Activated naive CD4-positive, alpha-beta T cell treated with anti-CD3 and anti-CD28 coated beads for 36 hours (primary cell): ENCODE measurements at regions of chr6 and their contacts with region 1.

Region 1: DNA sequence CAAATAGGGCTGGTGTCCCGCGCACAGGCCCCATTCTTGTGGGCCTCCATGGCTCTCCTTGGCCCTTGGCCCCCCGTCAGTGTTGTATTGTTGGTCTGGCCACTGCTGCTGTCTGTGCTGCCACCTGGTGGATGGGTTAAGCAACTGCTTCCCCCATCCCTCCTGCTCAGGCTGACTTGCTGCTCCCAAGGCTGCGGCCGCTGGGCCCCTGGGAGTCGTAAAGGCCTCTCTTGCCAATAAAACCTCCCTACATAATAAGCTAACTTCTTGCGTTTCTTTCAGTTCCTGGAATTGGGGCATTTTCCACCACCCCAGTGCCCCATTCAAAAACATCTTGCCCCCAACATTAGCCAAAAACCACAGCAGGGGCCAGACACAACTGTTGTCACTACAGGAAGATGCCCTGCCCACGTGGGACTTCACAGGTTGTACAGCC is 27.1 kb downstream of the CD83 start:
- DNase-seq: peak; percentile 82
- H3K4me3 Mint-ChIP-seq: no peak overlapping the region
- H3K27ac Mint-ChIP-seq: no peak overlapping the region
- H3K4me1 Mint-ChIP-seq: peaks cover 2% of the 10 kb centered on the region
- H3K27me3 Mint-ChIP-seq: no peaks in the 10 kb centered on the region

Region 2: DNA sequence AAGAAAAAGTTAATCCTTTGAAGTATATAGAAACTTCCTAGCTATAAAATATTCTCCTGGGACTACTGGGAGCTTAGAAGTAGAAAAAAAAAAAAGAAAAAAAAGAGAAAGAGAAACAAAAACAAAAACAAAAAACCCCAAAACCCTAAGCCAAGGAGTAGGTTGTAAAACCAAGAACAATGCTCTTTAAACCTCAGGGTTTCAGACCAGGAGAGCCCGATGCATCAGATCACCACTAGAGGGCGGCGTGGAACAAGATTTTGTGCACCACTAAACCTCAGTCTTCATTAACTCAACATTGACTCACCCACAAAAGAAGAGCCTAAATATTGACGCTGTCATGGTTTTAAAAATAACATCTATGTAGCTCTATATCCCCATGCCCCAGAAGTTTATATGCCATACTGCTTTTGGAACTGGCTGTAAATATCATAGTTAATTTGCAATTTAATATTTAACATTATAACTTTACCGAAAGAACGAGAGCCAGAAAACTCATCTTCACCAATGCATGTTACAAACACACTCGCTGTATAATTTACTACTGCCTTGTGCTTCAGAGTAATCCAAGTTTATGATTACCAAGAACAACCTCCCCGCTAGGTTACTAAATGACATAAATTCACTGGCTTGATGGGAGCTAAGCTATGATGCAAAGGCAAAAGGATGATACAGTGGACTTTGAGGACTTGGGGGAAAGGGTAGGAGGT is 349.5 kb before region 1 on chr6:
- CTCF ChIA-PET with region 1: no interaction called
- intact Hi-C with region 1: loop called (anchors 1 kb)
- DNase-seq: peak; percentile 97
- H3K4me3 Mint-ChIP-seq: no peak overlapping the region
- H3K27ac Mint-ChIP-seq: no peak overlapping the region
- H3K4me1 Mint-ChIP-seq: peaks cover 14% of the 10 kb centered on the region
- H3K27me3 Mint-ChIP-seq: no peaks in the 10 kb centered on the region

Region 3: GRCh38 chr6:13908955-13909381 is 235.7 kb before region 1 on chr6:
- CTCF ChIA-PET with region 1: interaction called, 30 read pairs
- intact Hi-C with region 1: loop called (anchors 1 kb)
- DNase-seq: peak; percentile 62
- H3K4me3 Mint-ChIP-seq: no peak overlapping the region
- H3K27ac Mint-ChIP-seq: no peak overlapping the region
- H3K4me1 Mint-ChIP-seq: peaks cover 2% of the 10 kb centered on the region
- H3K27me3 Mint-ChIP-seq: peaks cover 26% of the 10 kb centered on the region

Region 4: GRCh38 chr6:14046476-14047068 is 98.1 kb before region 1 on chr6:
- CTCF ChIA-PET with region 1: interaction called, 20 read pairs
- intact Hi-C with region 1: loop called (anchors 1 kb)
- DNase-seq: peak; percentile 62
- H3K4me3 Mint-ChIP-seq: no peak overlapping the region
- H3K27ac Mint-ChIP-seq: no peak overlapping the region
- H3K4me1 Mint-ChIP-seq: no peaks in the 10 kb centered on the region
- H3K27me3 Mint-ChIP-seq: peaks cover 18% of the 10 kb centered on the region

Region 5: DNA sequence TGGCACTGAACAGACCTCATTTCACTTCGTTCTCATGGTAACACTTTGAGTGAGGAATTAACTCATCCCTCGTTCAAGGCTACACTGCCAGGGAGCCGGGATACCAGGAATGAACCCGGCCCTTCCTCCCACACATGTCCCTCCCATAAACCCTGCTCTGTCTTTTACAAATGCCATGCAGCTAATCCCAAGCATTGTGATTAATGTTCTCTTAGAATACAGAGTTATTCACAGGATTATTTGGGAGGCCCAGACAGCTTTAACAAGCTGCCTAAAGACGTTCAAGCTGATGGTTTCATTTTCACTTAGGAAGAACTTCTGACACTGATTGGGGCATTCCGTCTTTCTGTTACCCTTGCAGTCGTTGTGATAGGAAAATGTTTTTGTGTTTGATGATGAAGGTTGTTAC is 69.6 kb before region 1 on chr6:
- CTCF ChIA-PET with region 1: interaction called, 3 read pairs
- intact Hi-C with region 1: loop called (anchors 1 kb)
- DNase-seq: peak; percentile 29
- H3K4me3 Mint-ChIP-seq: peak overlapping the region; percentile 46
- H3K27ac Mint-ChIP-seq: peak overlapping the region; percentile 73
- H3K4me1 Mint-ChIP-seq: peaks cover 53% of the 10 kb centered on the region
- H3K27me3 Mint-ChIP-seq: no peaks in the 10 kb centered on the region

Region 6: DNA sequence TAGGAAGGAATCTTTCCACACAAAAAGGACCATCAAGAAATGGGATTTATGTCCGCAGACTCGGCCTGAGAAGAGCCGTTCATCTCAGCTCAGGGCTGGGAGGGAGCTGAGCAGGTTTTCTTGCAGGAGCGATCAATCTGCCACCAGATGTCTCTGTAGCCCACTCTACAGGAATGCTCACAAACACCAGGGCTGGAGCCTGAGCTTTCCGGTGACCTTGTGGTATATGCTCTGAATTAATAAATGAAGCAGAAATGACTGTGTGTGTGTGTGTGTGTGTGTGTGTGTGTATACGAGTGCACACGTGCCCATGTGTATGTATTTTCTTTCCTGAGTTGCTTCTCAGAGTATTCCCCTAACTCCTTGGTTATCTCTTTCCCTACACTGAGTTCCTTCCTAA is 15.1 kb before region 1 on chr6:
- CTCF ChIA-PET with region 1: interaction called, 10 read pairs
- intact Hi-C with region 1: no loop called
- DNase-seq: peak; percentile 57
- H3K4me3 Mint-ChIP-seq: no peak overlapping the region
- H3K27ac Mint-ChIP-seq: no peak overlapping the region
- H3K4me1 Mint-ChIP-seq: peaks cover 23% of the 10 kb centered on the region
- H3K27me3 Mint-ChIP-seq: no peaks in the 10 kb centered on the region

Region 7: GRCh38 chr6:15595461-15596173 is 1450.9 kb after region 1 on chr6:
- CTCF ChIA-PET with region 1: no interaction called
- intact Hi-C with region 1: no loop called
- DNase-seq: no peak
- H3K4me3 Mint-ChIP-seq: no peak overlapping the region
- H3K27ac Mint-ChIP-seq: no peak overlapping the region
- H3K4me1 Mint-ChIP-seq: peaks cover 37% of the 10 kb centered on the region
- H3K27me3 Mint-ChIP-seq: no peaks in the 10 kb centered on the region